Right ventricle myocardium superior (tissue), 1 donor: ENCODE measurements at regions of chr9 and their contacts with region 1.

Region 1: DNA sequence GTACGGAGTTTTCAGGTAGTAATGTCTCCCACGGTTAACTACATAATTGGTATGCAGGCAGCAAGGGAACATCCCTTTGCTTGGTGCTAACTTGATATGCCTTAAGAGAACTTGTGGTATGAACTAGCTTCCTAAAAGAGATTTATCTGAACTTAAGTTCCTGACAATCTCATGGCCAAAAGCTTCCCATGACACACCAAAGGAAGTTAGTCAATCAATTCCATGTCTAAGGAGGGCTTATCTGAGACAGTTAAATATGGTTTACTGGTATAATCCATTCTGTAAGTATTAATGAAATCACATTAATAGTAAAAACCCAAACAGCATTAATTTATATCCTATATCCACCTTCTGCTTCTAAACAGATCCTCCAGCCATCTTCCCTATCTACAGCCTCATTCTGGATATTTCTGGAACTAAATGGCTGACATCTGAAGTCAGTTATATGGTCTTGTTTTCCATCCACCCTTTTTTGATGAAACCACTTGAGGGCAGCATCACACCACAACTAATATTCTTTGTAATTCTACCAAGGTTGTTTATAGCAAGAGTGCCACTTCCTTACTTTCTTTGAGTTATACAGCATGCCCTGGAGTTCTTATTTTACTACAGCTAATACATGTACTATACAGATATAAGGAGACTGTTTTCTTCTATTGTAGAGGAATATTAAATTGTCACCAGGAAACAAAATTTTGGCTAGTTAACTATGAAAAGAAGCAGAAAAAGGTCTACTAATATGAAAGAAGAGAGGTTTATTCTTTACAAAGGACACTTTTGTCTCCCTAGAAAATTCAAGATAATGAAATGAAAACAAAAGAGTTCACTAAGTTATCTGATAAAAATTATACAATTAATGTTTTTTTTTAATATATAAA is 34.7 kb downstream of the SHOC1 start:
- DNase-seq: no peak
- ATAC-seq: peak; percentile 92

Region 2: GRCh38 chr9:112074250-112075008 is 314.4 kb after region 1 on chr9:
- intact Hi-C with region 1: loop called (anchors 2 kb)
- DNase-seq: peak; percentile 53
- ATAC-seq: peak; percentile 93

Region 3: GRCh38 chr9:112361601-112362000 is 601.6 kb after region 1 on chr9:
- intact Hi-C with region 1: loop called (anchors 10 kb)
- DNase-seq: no peak
- ATAC-seq: peak; percentile 53